A549 (cell line): ENCODE measurements at regions of chr19 and their contacts with region 1.

Region 1: GRCh38 chr19:41570639-41571112 is 5.3 kb upstream of the CEACAM21 start:
- DNase-seq: peak; percentile 85 to 90
- ATAC-seq: peak; percentile 90 to 99
- H3K4me3 ChIP-seq: no peak overlapping the region
- H3K27ac ChIP-seq: no peak overlapping the region
- H3K4me1 ChIP-seq: no peaks in the 10 kb centered on the region; the same call in 2 of the 3 replicates
- CTCF ChIP-seq: peak; percentile 99
- EP300 ChIP-seq: no peak
- POLR2A ChIP-seq: no peak
- RAD21 ChIP-seq: peak; percentile 96 to 99

Region 2: GRCh38 chr19:41363753-41364523 is 206.7 kb before region 1 on chr19 and contains the start of gene B9D2:
- CTCF ChIA-PET with region 1: interaction called, 13 read pairs
- POLR2A ChIA-PET with region 1: no interaction called
- DNase-seq: peak; percentile 100
- ATAC-seq: peak; percentile 89 to 93
- H3K4me3 ChIP-seq: peak within 1 kb of the TSS; percentile 66
- H3K27ac ChIP-seq: peak within 1 kb of the TSS; percentile 92 to 94
- H3K4me1 ChIP-seq: peaks cover 49% of the 10 kb centered on the region
- CTCF ChIP-seq: no peak
- EP300 ChIP-seq: no peak
- POLR2A ChIP-seq: peak; percentile 80
- RAD21 ChIP-seq: no peak
- polyA plus RNA-seq, gene B9D2: 17.5 and 19.6 TPM in 2 replicates

Region 3: DNA sequence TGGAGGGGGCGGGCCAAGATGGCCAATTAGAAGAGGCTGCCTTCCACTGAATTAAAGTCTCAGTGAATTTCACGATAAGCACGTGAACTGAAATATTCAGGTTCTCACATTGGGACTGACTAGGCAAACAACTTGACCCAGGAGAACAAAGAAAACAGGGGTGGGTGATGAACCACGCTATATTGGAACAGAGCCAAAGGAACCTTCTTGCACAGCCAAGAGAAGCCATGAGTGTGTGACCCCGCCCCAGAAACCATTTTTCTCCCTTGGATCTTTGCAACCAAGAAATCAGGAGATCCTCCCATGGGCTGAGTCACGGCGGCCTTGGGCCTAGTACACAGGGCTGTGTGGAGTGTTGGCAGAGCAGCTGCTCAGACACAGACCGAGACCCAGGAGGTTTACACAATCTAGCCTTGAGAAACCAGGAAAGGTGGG is 90.9 kb before region 1 on chr19:
- CTCF ChIA-PET with region 1: interaction called, 24 read pairs
- POLR2A ChIA-PET with region 1: no interaction called
- DNase-seq: peak in 1 of 2 experiments; percentile 41
- ATAC-seq: peak in 1 of 2 experiments; percentile 53; a peak in 3 of 6 replicates
- H3K4me3 ChIP-seq: no peak overlapping the region
- H3K27ac ChIP-seq: no peak overlapping the region
- H3K4me1 ChIP-seq: no peaks in the 10 kb centered on the region
- CTCF ChIP-seq: no peak
- EP300 ChIP-seq: no peak
- POLR2A ChIP-seq: no peak
- RAD21 ChIP-seq: no peak

Region 4: DNA sequence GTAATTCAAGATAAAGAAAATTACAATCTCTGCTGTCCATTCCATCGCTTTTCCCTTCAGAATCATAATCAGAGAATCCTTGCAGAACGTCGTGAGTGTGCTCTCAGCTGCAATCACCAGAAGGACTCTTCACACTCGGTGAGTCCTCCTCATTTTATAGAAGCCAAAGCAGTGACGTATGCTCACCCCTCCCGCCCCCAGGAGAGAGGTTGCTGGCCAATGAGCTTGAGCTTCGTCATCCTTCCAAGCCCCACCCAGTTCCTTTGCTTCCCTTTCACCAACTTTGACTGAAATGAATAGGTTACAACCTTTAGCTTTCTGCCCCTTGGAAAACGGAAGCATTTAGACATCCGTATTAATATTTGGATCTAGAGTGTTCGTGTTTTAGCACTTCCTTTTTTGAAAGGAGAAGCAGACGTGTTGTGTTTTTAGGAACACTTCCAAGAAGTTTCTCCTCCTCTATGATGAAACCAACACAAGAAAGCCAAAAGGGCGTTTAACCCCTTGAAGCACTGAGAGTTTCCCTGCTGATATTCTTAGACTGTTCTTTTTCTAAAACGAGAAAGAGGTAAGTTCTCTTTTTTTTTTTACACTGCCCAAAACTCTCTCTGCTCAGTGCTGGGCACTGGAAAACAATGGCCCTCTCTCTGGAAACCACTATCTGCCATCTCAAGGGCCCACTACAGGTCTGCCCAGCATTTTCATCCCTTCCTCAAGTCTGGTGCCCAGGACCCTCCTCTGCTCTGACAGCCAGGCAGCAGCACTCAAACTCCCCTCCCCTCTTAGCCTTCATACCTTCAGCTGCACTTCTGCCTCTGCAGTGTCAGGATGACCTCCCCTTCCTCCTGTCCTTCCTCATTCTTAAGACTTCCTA is 39.0 kb before region 1 on chr19:
- CTCF ChIA-PET with region 1: interaction called, 35 read pairs
- POLR2A ChIA-PET with region 1: no interaction called
- DNase-seq: peak; percentile 85
- ATAC-seq: peak; percentile 73 to 86
- H3K4me3 ChIP-seq: peak overlapping the region; percentile 38
- H3K27ac ChIP-seq: no peak overlapping the region
- H3K4me1 ChIP-seq: peaks cover 7% of the 10 kb centered on the region; the same call in 2 of the 3 replicates
- CTCF ChIP-seq: no peak
- EP300 ChIP-seq: no peak
- POLR2A ChIP-seq: no peak
- RAD21 ChIP-seq: no peak

Region 5: DNA sequence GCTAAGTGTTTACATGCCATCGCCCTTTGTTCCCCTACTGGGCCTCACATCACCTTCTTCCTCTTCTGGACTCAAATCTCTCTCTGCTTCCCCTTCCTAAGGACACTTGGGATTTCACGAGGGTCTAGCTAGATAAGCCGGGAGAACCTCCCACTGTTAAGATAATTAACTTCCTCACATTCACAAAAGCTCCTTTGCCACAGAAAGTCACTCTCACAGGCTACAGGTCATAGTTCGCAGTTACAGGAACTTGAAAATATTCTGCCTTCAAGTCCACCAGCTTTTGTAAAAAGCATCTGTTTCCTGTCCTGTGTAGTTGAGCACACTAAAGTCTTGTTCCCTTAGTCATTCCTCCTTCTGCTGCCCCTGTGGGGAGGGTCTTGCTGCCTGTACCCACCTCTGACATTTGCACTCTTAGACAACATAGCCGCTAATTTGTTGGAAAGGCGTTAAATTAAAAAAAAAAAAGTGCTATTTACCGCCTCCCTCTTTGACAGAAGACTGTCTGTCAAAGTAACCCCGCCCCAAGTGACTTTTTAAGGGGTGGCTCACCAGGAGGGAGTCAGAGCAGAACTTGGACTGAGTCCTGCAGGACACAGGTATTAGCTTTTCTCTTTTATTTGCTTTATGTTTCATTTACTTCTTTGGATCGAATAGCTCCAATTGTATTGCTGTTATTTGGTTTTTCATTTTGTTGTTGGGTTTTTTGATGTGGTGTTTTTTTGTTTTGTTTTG is 21.6 kb before region 1 on chr19:
- CTCF ChIA-PET with region 1: interaction called, 1,153 read pairs
- POLR2A ChIA-PET with region 1: interaction called, 3 read pairs
- DNase-seq: no peak
- ATAC-seq: no peak
- H3K4me3 ChIP-seq: no peak overlapping the region
- H3K27ac ChIP-seq: no peak overlapping the region
- H3K4me1 ChIP-seq: no peaks in the 10 kb centered on the region
- CTCF ChIP-seq: no peak
- EP300 ChIP-seq: no peak
- POLR2A ChIP-seq: no peak
- RAD21 ChIP-seq: no peak

Region 6: DNA sequence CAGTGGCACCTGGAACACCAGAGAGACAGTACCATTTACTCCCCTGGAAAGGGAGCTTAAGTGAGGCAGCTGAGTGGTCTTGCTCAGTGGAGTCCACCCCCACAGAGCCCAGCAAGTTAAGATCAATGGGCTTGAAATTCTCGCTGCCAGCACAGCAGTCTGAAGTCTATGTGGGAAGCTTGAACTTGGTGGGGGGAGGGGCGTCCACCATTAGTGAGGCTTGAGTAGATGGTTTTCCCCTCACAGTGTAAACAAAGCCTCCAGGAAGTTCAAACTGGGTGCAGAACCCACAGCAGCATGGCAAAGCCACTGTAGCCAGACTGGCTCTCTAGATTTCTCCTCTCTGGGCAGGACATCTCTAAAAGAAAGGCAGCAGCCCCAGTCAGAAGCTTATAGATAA is 86.5 kb after region 1 on chr19:
- CTCF ChIA-PET with region 1: interaction called, 14 read pairs
- POLR2A ChIA-PET with region 1: no interaction called
- DNase-seq: no peak
- ATAC-seq: no peak
- H3K4me3 ChIP-seq: no peak overlapping the region
- H3K27ac ChIP-seq: no peak overlapping the region
- H3K4me1 ChIP-seq: no peaks in the 10 kb centered on the region
- CTCF ChIP-seq: no peak
- EP300 ChIP-seq: no peak
- POLR2A ChIP-seq: no peak
- RAD21 ChIP-seq: no peak

Region 7: GRCh38 chr19:41699231-41699967 is 128.7 kb after region 1 on chr19:
- CTCF ChIA-PET with region 1: no interaction called
- POLR2A ChIA-PET with region 1: no interaction called
- DNase-seq: peak; percentile 58 to 72
- ATAC-seq: peak in 1 of 2 experiments; percentile 12; a peak in 1 of 6 replicates
- H3K4me3 ChIP-seq: no peak overlapping the region
- H3K27ac ChIP-seq: peak overlapping the region; percentile 71 to 86
- H3K4me1 ChIP-seq: peaks cover 58% of the 10 kb centered on the region
- CTCF ChIP-seq: no peak
- EP300 ChIP-seq: peak; percentile 16 to 64; a peak in 2 of 5 replicates
- POLR2A ChIP-seq: no peak
- RAD21 ChIP-seq: no peak